GM10248 (cell line): ENCODE measurements at regions of chr1 and their contacts with region 1.

Region 1: GRCh38 chr1:234114648-234115307 is 210.3 kb downstream of the SLC35F3 start:
- DNase-seq: peak; percentile 52
- CTCF ChIP-seq: peak; percentile 63

Region 2: GRCh38 chr1:234102583-234102982 is 12.2 kb before region 1 on chr1:
- CTCF ChIA-PET with region 1: interaction called, 29 read pairs
- POLR2A ChIA-PET with region 1: no interaction called
- DNase-seq: no peak
- CTCF ChIP-seq: no peak

Region 3: DNA sequence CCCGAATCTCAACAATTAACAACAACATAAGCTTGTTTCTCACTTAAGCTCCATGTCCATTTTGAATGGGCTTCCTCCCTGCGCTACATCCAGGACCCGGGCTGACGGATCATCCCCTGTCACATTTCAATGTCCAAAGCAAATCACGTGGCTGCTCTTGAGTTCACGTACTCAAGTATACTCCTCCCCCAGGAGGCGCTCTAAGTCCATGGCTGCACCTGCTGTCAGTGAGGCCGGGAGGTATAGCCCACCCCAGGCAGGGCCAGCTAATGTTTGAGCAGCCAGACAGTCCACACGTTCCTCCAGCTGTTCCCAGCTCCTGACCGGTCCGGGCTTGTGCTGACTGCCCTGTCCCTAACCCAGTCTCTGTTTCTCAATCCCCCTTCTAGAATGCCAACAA is 10.5 kb after region 1 on chr1:
- CTCF ChIA-PET with region 1: interaction called, 24 read pairs
- POLR2A ChIA-PET with region 1: no interaction called
- DNase-seq: peak; percentile 32
- CTCF ChIP-seq: no peak

Region 4: DNA sequence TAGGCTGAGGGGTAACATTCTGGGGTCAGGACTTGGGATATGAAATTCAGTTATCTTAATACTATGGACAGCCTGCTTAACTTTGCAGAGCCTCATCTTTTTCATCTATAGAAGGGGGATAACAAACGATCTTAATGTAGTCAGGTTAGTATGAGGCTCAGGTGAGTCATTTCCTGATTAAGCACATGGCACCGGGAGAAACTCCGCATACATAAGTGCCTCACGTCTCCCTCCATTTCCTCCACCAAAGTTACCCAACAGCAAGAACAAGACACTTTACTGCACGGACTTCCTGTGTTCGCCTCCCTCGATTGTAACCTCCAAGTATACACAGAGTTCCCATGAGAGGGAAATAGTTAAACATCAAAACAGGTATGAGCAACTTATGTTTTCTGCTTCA is 145.8 kb after region 1 on chr1:
- CTCF ChIA-PET with region 1: no interaction called
- POLR2A ChIA-PET with region 1: no interaction called
- DNase-seq: no peak
- CTCF ChIP-seq: no peak